ENCODE measurements at regions of chr3 and their contacts with region 1.

Region 1: DNA sequence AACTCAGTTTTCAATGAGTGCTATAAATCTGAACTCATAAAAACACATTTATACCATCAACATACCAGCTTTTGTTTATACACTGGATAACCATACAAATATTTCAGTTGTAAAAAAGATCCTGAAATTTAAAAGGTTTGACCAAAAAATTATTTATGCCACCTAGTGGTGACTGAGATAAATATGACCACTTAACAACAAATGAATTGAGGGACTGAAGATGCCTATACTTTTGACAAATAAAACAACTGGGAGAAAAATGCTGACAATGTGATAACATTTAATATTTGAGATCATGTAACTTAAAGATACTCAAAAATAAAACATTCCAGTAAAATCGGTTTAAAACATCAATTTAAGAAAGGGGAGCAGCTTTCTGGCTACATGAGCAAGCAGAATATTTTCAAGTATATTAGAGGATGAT is 30.4 kb downstream of the ATG3 start:
- DNase-seq: no peak
- ATAC-seq: no peak
- H3K4me3 ChIP-seq: no peak overlapping the region
- H3K27ac ChIP-seq: no peak overlapping the region
- H3K4me1 ChIP-seq: no peaks in the 10 kb centered on the region
- H3K27me3 ChIP-seq: no peaks in the 10 kb centered on the region
- CTCF ChIP-seq: peak in 3 of 5 experiments; percentile 34 to 53 (median 41)
- POLR2A ChIP-seq: no peak

Region 2: GRCh38 chr3:111481551-111481950 is 1049.8 kb before region 1 on chr3:
- in situ Hi-C with region 1: no loop called
- intact Hi-C with region 1: no loop called
- DNase-seq: no peak
- ATAC-seq: no peak
- H3K4me3 ChIP-seq: no peak overlapping the region
- H3K27ac ChIP-seq: no peak overlapping the region
- H3K4me1 ChIP-seq: no peaks in the 10 kb centered on the region
- H3K27me3 ChIP-seq: no peaks in the 10 kb centered on the region
- CTCF ChIP-seq: no peak
- POLR2A ChIP-seq: no peak

Region 3: GRCh38 chr3:112111785-112112402 is 419.5 kb before region 1 on chr3:
- in situ Hi-C with region 1: no loop called
- intact Hi-C with region 1: loop called (anchors 10 kb)
- DNase-seq: no peak
- ATAC-seq: no peak
- H3K4me3 ChIP-seq: no peak overlapping the region
- H3K27ac ChIP-seq: no peak overlapping the region
- H3K4me1 ChIP-seq: no peaks in the 10 kb centered on the region
- H3K27me3 ChIP-seq: no peaks in the 10 kb centered on the region
- CTCF ChIP-seq: peak in 4 of 5 experiments; percentile 9 to 52 (median 33)
- POLR2A ChIP-seq: no peak

Region 4: DNA sequence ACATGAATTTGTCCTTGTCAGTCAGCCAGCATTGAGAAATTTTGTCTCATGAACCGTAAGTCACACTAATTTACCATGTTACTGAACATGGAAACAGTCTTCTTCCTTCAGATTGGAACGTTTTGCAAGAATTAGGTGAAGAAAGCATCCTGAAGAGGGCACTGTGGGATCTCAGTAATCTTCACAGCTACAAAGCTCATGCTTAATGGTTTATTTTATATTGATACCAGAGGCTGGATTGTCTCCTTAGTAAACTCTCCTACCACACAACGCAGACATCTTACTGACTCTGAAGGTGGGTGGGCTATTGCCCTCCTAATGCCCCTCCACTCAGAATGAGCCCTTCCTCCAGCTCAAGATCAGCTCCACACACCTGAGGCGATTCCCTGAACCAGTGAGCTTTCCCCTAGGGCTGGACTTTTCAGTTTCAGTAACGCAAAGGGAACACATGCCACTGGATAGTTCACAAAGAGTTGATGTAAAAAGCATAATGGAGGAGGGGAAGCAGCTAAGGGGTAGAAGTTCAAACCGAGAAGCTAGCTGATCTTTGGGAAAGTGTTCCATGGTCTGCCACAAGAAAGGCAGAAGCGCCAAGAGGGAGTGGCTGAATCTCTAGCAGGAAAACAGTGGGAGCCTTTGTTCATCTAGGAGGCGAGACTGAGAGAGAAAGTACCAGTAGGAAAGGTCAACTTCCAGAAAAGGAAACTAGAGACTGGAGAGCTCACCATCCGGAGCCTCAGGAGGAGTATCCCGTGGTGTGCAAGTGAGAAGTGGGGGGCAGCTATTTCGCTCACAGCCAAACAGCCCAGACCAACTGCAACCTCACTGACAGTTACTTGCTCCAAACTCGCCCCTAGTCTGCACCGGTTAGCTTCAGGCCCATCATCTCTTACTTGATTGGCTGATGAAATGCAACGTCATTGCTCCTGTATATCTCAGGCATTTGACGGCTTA is 237.7 kb before region 1 on chr3 and contains the start of gene SLC9C1:
- in situ Hi-C with region 1: no loop called
- intact Hi-C with region 1: loop called (anchors 5 kb)
- DNase-seq: no peak
- ATAC-seq: peak; percentile 72 to 79
- H3K4me3 ChIP-seq: peak within 1 kb of the TSS; percentile 35 to 49 (median 42)
- H3K27ac ChIP-seq: peak within 1 kb of the TSS in 3 of 4 donors; percentile 31 to 66 (median 31)
- H3K4me1 ChIP-seq: peaks cover 0 to 3% of the 10 kb centered on the region in 2 donors
- H3K27me3 ChIP-seq: no peaks in the 10 kb centered on the region
- CTCF ChIP-seq: peak in 3 of 5 experiments; percentile 27 to 46 (median 42)
- POLR2A ChIP-seq: no peak
- total RNA-seq, gene SLC9C1: not detected

Region 5: GRCh38 chr3:112473212-112473640 is 58.1 kb before region 1 on chr3:
- in situ Hi-C with region 1: no loop called
- intact Hi-C with region 1: no loop called
- DNase-seq: no peak
- ATAC-seq: no peak
- H3K4me3 ChIP-seq: no peak overlapping the region
- H3K27ac ChIP-seq: no peak overlapping the region
- H3K4me1 ChIP-seq: no peaks in the 10 kb centered on the region
- H3K27me3 ChIP-seq: no peaks in the 10 kb centered on the region
- CTCF ChIP-seq: no peak
- POLR2A ChIP-seq: no peak

Region 6: DNA sequence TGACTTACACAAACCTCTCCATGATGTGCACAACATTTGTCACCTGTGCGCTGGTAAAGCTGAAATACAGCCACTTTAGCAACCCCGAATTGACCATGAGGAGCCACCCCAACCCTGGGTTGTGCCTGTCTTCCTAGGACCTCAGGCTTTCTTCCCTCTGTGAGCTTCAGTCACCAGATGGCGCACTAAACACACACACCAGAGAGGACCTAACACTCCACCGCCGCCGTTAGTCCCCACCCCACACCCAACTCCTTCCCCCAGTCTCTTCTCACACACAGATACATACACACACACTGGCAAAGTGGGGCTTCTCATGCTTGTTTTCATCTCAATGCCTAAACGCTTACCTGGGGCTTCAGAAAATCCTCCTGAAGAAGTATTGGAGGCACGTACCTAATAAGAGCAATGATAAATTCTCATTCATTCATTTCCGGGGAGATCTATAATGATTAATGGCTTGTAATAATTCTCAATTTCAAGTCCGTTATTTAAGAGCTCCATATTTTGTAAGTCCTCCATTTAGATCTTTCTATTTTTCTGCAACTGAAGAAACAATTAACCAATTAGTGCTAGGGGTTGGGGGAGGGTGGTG is 111.6 kb after region 1 on chr3:
- in situ Hi-C with region 1: no loop called
- intact Hi-C with region 1: no loop called
- DNase-seq: peak; percentile 59 to 71
- ATAC-seq: peak; percentile 67 to 69
- H3K4me3 ChIP-seq: peak overlapping the region in 1 of 4 donors; percentile 34
- H3K27ac ChIP-seq: no peak overlapping the region
- H3K4me1 ChIP-seq: peaks cover 18 to 28% of the 10 kb centered on the region in 2 donors
- H3K27me3 ChIP-seq: no peaks in the 10 kb centered on the region
- CTCF ChIP-seq: peak; percentile 38 to 78 (median 63)
- POLR2A ChIP-seq: no peak